ENCODE measurements at regions of chr7 and their contacts with region 1.

Region 1: DNA sequence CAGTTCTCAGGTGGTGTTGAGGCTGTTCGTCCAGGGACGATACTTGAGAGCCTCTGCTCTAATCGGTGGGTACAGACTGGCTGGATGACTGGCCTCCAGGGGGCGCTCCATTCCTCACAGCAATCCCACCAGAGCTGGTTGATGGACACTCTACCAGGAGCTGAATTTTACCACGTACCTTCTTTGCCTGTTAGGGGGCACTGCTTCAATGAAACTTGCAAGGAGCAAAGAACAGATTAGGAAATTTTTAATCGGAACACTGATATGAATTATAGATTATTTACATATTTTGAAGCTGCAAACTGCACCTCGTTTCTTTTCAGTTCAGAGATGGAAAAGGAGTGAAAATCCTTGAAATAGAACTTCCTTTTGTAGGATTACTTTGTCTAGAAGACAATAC is 44.9 kb downstream of the KBTBD2 start:
- DNase-seq: peak; percentile 96
- H3K4me3 Mint-ChIP-seq: no peak overlapping the region
- H3K27ac Mint-ChIP-seq: no peak overlapping the region
- H3K4me1 Mint-ChIP-seq: peaks cover 6% of the 10 kb centered on the region
- H3K27me3 Mint-ChIP-seq: peaks cover 12% of the 10 kb centered on the region

Region 2: GRCh38 chr7:32803406-32804141 is 43.1 kb before region 1 on chr7:
- CTCF ChIA-PET with region 1: interaction called, 9 read pairs
- intact Hi-C with region 1: loop called (anchors 1 kb)
- DNase-seq: no peak
- H3K4me3 Mint-ChIP-seq: no peak overlapping the region
- H3K27ac Mint-ChIP-seq: no peak overlapping the region
- H3K4me1 Mint-ChIP-seq: no peaks in the 10 kb centered on the region
- H3K27me3 Mint-ChIP-seq: no peaks in the 10 kb centered on the region

Region 3: DNA sequence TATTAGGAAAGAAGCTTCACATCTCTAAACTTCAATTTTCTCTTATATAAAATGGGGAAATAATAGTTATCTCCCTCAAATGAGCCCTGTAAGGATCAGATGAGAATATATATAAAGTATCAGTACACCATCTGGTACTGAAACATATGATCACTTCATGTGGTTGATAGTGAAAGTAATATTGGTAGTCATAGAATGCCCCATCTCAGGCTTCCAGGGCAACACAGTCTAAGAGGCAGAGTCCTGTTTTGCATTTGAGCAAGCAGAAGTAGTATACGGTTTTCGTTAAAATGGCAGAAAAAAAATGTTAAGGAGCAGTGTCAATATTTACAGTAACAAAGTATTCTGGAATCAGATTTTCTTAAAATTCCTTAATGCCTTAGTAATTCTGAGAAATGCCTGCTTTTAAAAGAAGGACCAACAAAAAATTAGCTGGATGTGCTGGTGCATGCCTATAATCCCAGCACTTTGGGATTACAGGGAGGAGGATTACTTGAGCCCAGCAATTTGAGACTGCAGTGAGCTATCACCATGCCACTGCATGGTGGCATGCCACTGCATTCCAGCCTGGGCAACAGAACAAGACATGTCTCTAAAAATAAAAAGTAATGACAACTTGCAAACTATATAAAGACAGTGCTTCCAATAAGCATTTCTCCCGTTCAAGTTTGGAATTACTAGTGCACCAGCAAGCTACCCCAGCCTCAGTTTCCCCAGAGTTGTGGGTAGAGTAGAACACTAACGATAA is 25.1 kb after region 1 on chr7:
- CTCF ChIA-PET with region 1: interaction called, 15 read pairs
- intact Hi-C with region 1: no loop called
- DNase-seq: no peak
- H3K4me3 Mint-ChIP-seq: no peak overlapping the region
- H3K27ac Mint-ChIP-seq: no peak overlapping the region
- H3K4me1 Mint-ChIP-seq: peaks cover 21% of the 10 kb centered on the region
- H3K27me3 Mint-ChIP-seq: no peaks in the 10 kb centered on the region

Region 4: DNA sequence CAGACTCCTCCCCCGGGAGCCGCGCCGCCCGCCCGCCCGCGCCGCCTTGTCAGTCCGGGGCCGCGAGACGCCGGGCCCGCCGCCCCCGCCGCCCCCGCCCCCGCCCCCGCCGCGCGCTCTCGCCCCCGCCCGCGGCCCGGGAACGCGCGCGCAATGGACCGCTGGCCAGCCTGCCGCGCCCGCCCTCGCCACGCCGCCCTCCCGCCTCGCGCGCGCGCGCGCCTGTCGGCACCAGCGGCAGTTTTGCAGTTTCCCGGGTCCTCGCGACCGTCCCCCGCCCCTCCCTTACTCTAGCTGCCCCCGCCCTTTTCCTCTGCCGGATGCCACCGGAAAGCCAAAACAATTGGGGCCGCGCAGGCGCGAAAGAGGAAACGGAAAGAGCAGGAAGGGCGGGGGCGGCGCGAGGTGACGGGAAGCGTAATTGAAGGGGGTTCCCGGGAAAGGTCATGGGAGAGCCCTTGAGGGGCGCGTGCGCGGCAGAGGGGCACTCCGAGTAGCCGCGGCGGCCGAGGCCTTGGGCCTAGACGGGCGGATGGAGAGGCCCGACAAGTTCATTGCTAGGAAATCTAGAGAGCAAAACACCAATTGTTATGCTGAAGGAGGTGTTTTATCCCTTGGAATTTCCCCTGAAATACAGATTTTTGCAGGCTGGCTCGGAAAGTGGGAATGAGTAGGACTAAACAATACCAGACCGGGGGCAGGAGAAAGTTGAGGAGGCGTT is 45.3 kb after region 1 on chr7:
- CTCF ChIA-PET with region 1: interaction called, 42 read pairs
- intact Hi-C with region 1: loop called (anchors 1 kb)
- DNase-seq: peak; percentile 99
- H3K4me3 Mint-ChIP-seq: peak overlapping the region; percentile 89
- H3K27ac Mint-ChIP-seq: peak overlapping the region; percentile 99
- H3K4me1 Mint-ChIP-seq: peaks cover 47% of the 10 kb centered on the region
- H3K27me3 Mint-ChIP-seq: no peaks in the 10 kb centered on the region

Region 5: DNA sequence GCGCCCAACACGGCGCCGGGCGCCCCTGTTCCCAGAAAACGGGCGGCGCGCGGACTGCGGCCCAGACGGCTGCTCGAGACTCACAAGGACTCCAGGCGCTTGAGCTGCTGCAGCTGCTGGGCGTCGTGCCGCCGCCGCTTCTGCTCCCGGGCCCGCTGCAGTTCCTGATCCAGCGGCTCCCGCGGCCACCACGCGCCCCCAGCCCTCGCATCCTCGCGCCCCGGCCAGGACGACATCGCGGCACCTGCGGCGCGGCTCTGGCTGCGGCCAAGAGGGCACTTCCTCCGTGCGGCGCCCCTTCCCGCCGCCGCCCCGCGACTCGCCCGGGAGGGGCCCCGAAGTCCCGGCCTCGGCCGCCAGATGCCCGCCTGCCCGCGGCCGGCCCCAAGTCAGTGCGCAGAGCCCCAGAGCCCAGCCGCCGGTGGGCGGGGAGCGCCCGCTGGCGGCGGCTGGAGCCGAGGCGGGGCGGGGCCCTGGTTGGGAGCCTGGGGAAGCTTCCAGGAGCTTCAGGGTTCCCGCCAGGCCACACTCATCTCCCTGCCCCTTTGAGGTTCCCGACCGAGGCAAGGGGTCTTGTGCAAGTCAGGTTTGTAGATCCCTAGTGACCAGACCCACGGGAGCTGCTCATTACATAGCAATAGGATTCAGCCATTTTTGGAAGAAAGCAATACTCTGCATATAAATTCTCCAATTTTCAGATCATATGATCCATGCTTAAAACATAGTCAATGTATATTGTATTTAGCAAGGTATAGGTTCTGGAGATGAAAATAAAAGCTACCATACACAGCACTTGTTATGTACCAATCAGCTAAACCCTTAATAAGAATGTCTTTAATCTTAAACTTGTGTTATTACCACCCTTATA is 96.3 kb after region 1 on chr7:
- CTCF ChIA-PET with region 1: interaction called, 125 read pairs
- intact Hi-C with region 1: loop called (anchors 1 kb)
- DNase-seq: peak; percentile 74
- H3K4me3 Mint-ChIP-seq: peak overlapping the region; percentile 66
- H3K27ac Mint-ChIP-seq: no peak overlapping the region
- H3K4me1 Mint-ChIP-seq: peaks cover 18% of the 10 kb centered on the region
- H3K27me3 Mint-ChIP-seq: no peaks in the 10 kb centered on the region

Region 6: GRCh38 chr7:33040803-33041516 is 194.3 kb after region 1 on chr7:
- CTCF ChIA-PET with region 1: interaction called, 11 read pairs
- intact Hi-C with region 1: loop called (anchors 2 kb)
- DNase-seq: peak; percentile 84
- H3K4me3 Mint-ChIP-seq: peak overlapping the region; percentile 69
- H3K27ac Mint-ChIP-seq: peak overlapping the region; percentile 86
- H3K4me1 Mint-ChIP-seq: peaks cover 47% of the 10 kb centered on the region
- H3K27me3 Mint-ChIP-seq: no peaks in the 10 kb centered on the region